ENCODE measurements at regions of chr3 and their contacts with region 1.

Region 1: DNA sequence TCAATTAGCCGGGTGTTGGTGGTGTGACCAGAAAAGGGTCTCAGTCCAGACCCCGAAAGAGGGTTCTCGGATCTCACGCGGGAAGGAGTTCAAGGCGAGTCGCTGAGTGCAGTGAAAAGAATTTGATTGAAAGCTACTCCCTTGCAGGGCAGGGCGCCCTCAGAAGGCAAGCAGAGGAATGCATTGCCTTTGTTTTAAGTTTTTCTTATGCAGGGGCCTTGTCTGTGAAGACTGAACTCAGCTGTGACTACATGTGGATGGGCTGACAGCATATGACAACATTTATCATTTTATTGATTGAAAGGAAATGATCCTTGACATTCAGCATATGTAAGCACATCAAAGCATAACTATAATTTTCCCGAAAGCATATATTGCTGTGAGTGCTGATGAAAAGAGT is 11.8 kb downstream of the CPN2 start:
- DNase-seq: no peak
- ATAC-seq: no peak

Region 2: DNA sequence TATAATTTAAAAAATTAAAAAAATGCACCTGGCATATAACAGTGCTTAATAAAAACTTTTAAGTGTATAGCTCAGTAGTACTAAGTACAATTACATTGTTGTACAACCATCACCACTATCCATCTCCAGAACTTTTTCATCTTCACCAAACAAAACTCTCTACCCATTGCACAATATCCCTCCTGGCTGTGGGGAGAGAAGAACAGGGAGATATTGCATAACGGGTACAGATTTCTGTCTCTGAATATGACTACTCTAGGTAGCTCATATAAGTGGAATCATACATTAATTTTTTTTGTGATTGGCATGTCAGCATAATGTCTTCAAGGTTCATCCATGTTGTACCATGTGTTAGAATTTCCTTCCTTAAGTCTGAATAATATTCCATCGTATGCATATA is 1189.4 kb before region 1 on chr3:
- intact Hi-C with region 1: no loop called
- DNase-seq: no peak
- ATAC-seq: no peak

Region 3: DNA sequence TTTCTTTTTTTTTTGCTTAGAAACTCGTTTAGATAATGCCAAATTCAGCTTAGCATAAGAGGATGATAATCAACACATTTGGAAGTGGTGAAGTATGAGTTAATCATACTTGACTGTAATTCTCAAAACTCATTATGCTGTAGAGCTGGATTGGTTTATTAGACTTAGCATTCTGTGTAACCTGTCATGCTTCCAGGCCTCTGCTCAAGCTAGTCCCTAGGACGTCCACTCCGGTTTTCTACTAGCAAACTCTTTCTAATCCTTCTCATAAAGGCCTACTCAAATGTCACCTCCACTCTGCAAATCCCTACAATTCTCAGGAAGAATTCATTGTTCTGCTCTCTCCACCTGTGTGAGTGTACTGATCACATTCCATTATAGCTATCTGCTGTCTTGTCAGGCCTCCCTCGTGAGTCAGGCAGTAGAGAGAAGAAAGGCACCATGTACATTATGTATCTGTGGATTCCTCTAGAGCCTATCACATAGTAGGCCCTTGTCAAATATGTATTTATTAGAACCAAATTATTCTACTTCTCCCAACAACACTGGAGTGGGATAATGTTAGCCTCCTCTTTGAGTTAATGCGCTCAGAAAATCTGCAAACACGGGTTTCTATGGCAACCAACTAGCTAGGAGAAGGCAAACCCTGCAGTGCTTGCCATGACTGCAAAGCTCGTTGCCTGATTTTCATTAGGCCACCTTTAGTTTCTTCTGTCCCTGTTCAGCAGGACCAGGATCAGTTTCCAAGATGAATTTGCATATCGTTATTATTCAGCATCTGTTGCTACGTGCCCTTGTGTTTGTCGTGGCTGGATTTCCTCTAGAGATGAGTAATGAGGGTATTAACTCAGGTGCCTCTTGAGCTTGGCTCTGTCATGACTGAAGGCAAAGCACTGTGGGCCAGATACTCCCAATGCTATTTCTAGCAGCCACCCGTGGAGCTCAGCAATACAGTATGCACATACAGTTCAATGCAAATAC is 991.5 kb before region 1 on chr3:
- intact Hi-C with region 1: no loop called
- DNase-seq: no peak
- ATAC-seq: no peak

Region 4: GRCh38 chr3:194404365-194405140 is 65.2 kb after region 1 on chr3:
- intact Hi-C with region 1: loop called (anchors 5 kb)
- DNase-seq: no peak
- ATAC-seq: no peak

Region 5: DNA sequence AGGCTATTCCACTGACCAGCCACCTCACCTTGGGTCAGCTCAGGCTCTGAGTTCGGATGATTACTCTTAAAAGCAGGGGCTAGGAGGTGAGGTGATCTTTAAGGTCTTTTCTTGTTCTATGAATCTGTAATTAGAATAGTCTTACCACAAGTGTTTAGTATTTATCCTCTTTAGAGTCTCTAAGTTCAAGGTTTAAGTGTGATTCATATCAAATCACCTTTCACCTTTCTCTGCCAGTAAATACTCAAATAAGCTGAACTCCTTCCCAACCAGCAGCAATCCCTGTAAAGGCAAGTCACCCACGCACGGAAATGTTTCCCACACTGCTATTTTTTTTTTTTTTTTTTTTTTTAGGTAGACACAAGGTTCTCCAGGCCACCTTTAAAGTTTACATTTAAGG is 308.4 kb after region 1 on chr3:
- intact Hi-C with region 1: no loop called
- DNase-seq: no peak
- ATAC-seq: no peak

Measured in sciatic nerve (tissue), 2 donors.